Heart right ventricle (tissue), 16 donors: ENCODE measurements at regions of chr3 and their contacts with region 1.

Region 1: GRCh38 chr3:37855363-37855970 is 6.2 kb upstream of the CTDSPL start:
- DNase-seq: peak; percentile 87 to 88
- ATAC-seq: peak; percentile 28 to 67 (median 56)
- H3K4me3 ChIP-seq: no peak overlapping the region
- H3K27ac ChIP-seq: peak overlapping the region in 4 of 10 donors; percentile 49 to 70 (median 60)
- H3K4me1 ChIP-seq: peaks cover 3 to 31% (median 19%) of the 10 kb centered on the region in 9 donors
- H3K27me3 ChIP-seq: no peaks in the 10 kb centered on the region
- CTCF ChIP-seq: peak; percentile 89 to 99 (median 96)

Region 2: DNA sequence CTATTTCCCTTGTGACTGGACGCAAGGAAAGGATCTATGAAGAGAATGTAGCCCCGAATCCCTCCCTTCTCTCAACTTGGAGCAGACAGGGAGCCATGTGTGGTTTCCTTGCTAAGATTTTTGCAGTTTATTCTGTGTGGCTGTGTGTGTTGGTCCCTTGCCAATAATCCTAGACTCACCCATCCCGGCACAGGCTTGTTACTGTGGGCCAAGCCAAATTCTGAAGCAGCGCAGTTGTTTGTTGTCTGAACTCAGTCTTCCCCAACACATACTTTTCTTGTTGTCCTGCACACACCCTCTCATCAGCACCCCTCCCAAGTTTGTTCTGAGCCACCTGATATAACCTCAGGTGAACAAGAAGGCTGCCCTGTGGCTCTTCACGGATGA is 187.0 kb before region 1 on chr3:
- intact Hi-C with region 1: no loop called
- DNase-seq: peak in 1 of 2 donors; percentile 46
- ATAC-seq: peak; percentile 32 to 74 (median 59)
- H3K4me3 ChIP-seq: no peak overlapping the region
- H3K27ac ChIP-seq: peak overlapping the region in 8 of 10 donors; percentile 11 to 68 (median 48)
- H3K4me1 ChIP-seq: peaks cover 18 to 73% (median 52%) of the 10 kb centered on the region in 9 donors
- H3K27me3 ChIP-seq: no peaks in the 10 kb centered on the region
- CTCF ChIP-seq: no peak

Region 3: DNA sequence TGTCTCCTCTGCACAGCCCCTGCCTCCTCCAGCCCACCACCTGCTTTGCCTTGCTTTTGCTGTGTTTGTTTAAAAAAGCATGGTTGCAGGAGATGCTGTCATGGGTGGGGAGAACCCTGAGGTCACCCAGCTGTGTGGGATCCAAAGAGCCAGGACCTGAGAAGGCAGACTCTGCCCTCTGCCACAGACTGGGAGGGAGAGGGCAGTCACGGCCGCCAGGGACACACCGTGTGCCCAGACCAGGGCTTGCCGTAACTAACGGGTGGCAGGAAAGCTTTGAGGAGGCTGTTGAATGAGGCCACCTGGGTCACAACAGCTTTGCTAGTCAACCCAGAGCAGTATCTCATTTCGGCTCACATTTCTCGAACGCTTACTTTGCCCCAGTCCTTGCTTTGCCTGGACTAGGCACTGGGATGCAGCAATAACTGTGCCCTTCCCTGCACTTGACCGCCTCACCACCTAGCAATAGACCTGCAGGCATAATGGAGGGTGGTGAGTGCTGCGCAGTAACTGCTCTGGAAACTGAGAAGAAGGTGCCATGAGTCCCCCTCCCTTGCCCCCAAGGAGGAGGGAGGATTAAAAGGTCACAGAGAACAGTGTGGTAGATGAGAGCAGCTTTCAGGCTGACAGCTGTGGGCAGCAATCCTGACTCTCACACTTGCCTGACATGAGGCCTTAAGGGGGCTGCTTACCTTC is 48.8 kb before region 1 on chr3:
- intact Hi-C with region 1: no loop called
- DNase-seq: no peak
- ATAC-seq: peak in 6 of 8 donors; percentile 13 to 50 (median 30)
- H3K4me3 ChIP-seq: no peak overlapping the region
- H3K27ac ChIP-seq: peak overlapping the region in 6 of 10 donors; percentile 7 to 58 (median 44)
- H3K4me1 ChIP-seq: peaks cover 6 to 34% (median 21%) of the 10 kb centered on the region in 9 donors
- H3K27me3 ChIP-seq: no peaks in the 10 kb centered on the region
- CTCF ChIP-seq: no peak

Region 4: GRCh38 chr3:37833302-37834186 is 21.9 kb before region 1 on chr3:
- intact Hi-C with region 1: no loop called
- DNase-seq: peak in 1 of 2 donors; percentile 36
- ATAC-seq: peak; percentile 76 to 92 (median 86)
- H3K4me3 ChIP-seq: no peak overlapping the region
- H3K27ac ChIP-seq: no peak overlapping the region
- H3K4me1 ChIP-seq: peaks cover 0 to 4% (median 0%) of the 10 kb centered on the region in 9 donors
- H3K27me3 ChIP-seq: no peaks in the 10 kb centered on the region
- CTCF ChIP-seq: peak; percentile 15 to 64 (median 50)

Region 5: GRCh38 chr3:37967260-37967881 is 111.9 kb after region 1 on chr3:
- intact Hi-C with region 1: loop called in 9 of 10 experiments (anchors 1 to 5 kb)
- DNase-seq: peak; percentile 63 to 69
- ATAC-seq: peak; percentile 59 to 80 (median 73)
- H3K4me3 ChIP-seq: no peak overlapping the region
- H3K27ac ChIP-seq: peak overlapping the region in 6 of 10 donors; percentile 0 to 84 (median 68)
- H3K4me1 ChIP-seq: peaks cover 10 to 64% (median 41%) of the 10 kb centered on the region in 9 donors
- H3K27me3 ChIP-seq: no peaks in the 10 kb centered on the region
- CTCF ChIP-seq: peak; percentile 60 to 90 (median 87)

Region 6: GRCh38 chr3:37996785-37997301 is 141.4 kb after region 1 on chr3:
- intact Hi-C with region 1: loop called in 4 of 10 experiments (anchors 2 to 5 kb)
- DNase-seq: peak; percentile 53 to 70
- ATAC-seq: peak in 2 of 8 donors; percentile 5 to 18
- H3K4me3 ChIP-seq: no peak overlapping the region
- H3K27ac ChIP-seq: no peak overlapping the region
- H3K4me1 ChIP-seq: peaks cover 0 to 52% (median 26%) of the 10 kb centered on the region in 9 donors
- H3K27me3 ChIP-seq: no peaks in the 10 kb centered on the region
- CTCF ChIP-seq: peak; percentile 80 to 96 (median 89)

Region 7: GRCh38 chr3:38004415-38005076 is 149.1 kb after region 1 on chr3:
- intact Hi-C with region 1: loop called in 4 of 10 experiments (anchors 2 to 5 kb)
- DNase-seq: peak; percentile 65 to 75
- ATAC-seq: peak; percentile 58 to 79 (median 77)
- H3K4me3 ChIP-seq: peak overlapping the region in 6 of 10 donors; percentile 17 to 51 (median 42)
- H3K27ac ChIP-seq: peak overlapping the region; percentile 1 to 83 (median 56)
- H3K4me1 ChIP-seq: peaks cover 0 to 24% (median 6%) of the 10 kb centered on the region in 9 donors
- H3K27me3 ChIP-seq: no peaks in the 10 kb centered on the region
- CTCF ChIP-seq: peak; percentile 48 to 81 (median 70)